ENCODE measurements at regions of chr1 and their contacts with region 1.

Region 1: GRCh38 chr1:71944006-71944405 is 338.3 kb downstream of the NEGR1 start:
- DNase-seq: no peak
- ATAC-seq: no peak
- H3K4me3 ChIP-seq: no peak overlapping the region
- H3K27ac ChIP-seq: no peak overlapping the region
- H3K4me1 ChIP-seq: no peaks in the 10 kb centered on the region
- H3K27me3 ChIP-seq: no peaks in the 10 kb centered on the region
- CTCF ChIP-seq: no peak

Region 2: GRCh38 chr1:71521655-71522264 is 422.2 kb before region 1 on chr1:
- CTCF ChIA-PET with region 1: no interaction called
- POLR2A ChIA-PET with region 1: no interaction called
- in situ Hi-C with region 1: no loop called
- intact Hi-C with region 1: no loop called
- DNase-seq: peak; percentile 13
- ATAC-seq: peak; percentile 63; the same call in 1 of the 2 replicates
- H3K4me3 ChIP-seq: no peak overlapping the region
- H3K27ac ChIP-seq: no peak overlapping the region
- H3K4me1 ChIP-seq: no peaks in the 10 kb centered on the region
- H3K27me3 ChIP-seq: no peaks in the 10 kb centered on the region
- CTCF ChIP-seq: peak; percentile 64; the same call in 1 of the 2 replicates

Region 3: DNA sequence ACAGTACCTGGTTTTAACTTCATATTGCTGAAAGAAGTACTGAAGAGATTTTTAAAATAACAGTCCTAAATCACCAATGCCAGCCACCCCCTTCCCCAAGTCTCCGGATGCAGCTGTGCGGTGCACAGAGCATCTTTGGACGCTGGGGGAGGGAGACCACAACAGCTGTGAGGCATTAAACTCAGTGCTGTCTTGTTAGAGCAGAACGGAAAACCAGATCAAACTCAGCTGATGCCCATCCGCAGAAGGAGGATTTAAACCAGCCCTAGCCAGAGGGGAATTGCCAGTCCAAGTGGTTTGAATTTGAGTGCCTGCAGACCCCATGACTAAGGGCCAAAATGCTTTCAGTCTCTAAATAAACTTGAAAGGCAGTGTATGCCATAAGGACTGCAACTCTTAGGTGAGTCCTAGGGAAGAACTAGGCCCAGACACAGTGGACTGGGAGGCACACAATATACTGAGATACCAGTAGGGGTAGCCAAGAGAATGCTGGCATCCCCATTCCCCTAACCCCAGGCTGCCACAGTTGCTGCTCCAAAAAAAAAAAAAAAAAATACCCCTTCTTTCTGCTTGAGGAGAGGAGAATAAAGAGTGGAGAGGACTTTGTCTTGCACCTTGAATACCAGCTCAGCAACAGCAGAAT is 237.9 kb before region 1 on chr1:
- CTCF ChIA-PET with region 1: no interaction called
- POLR2A ChIA-PET with region 1: interaction called, 10 read pairs
- in situ Hi-C with region 1: no loop called
- intact Hi-C with region 1: no loop called
- DNase-seq: no peak
- ATAC-seq: no peak
- H3K4me3 ChIP-seq: no peak overlapping the region
- H3K27ac ChIP-seq: no peak overlapping the region
- H3K4me1 ChIP-seq: no peaks in the 10 kb centered on the region
- H3K27me3 ChIP-seq: no peaks in the 10 kb centered on the region
- CTCF ChIP-seq: no peak

Region 4: GRCh38 chr1:71967670-71968069 is 23.7 kb after region 1 on chr1:
- CTCF ChIA-PET with region 1: no interaction called
- POLR2A ChIA-PET with region 1: no interaction called
- in situ Hi-C with region 1: no loop called
- intact Hi-C with region 1: no loop called
- DNase-seq: no peak
- ATAC-seq: no peak
- H3K4me3 ChIP-seq: no peak overlapping the region
- H3K27ac ChIP-seq: no peak overlapping the region
- H3K4me1 ChIP-seq: no peaks in the 10 kb centered on the region
- H3K27me3 ChIP-seq: no peaks in the 10 kb centered on the region
- CTCF ChIP-seq: no peak